GM23248 (cell line): ENCODE measurements at regions of chr6 and their contacts with region 1.

Region 1: DNA sequence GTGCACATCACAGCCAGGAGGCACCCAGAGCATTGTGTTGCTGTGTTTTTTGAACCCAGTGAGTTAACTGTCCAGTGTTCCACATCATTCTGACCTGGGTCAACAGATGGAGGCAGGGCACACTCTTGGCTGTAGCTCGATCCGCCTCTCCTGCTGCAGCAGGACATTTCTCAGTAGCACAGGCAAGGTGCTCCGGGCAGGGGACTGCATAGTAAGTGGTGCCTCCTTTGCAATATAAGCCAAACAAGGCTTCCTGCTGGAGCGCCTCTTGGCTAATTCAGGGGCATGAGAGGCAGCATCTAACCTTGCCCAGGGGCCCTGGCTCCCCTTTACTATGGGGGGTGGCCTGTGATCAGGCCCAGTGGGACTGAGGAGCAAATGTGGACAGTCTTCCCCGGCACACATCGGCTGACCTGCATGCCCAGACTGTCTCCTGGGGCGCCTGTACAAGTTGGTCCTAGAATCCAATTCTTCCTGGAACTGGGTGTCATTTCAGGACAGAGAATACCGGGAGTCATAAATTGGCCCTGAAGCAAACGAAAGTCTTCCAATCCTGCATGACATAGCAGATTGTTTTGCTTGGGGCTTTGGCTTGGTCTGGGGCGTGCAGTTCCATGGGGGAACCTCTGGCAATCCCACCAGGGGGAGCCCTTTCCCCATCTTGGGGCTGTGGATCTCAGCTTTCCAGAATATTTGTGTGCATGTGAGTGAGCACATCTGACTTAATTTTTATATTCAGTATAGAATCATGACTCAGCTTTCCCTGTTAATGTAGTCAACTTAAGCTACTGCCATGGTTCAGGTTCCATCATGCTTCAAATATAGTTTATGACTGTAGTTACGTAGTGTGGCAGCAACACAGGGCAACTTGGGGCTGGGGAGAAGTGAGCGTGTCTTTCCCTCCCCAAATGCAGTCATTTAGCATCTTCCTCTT is 56.0 kb upstream of the DDR1 start:
- DNase-seq: peak; percentile 93
- H3K4me3 ChIP-seq: no peak overlapping the region
- H3K27ac ChIP-seq: peak overlapping the region; percentile 72
- H3K4me1 ChIP-seq: peaks cover 15% of the 10 kb centered on the region
- H3K27me3 ChIP-seq: no peaks in the 10 kb centered on the region

Region 2: GRCh38 chr6:29589423-29590048 is 1238.8 kb before region 1 on chr6:
- in situ Hi-C with region 1: no loop called
- DNase-seq: peak; percentile 58
- H3K4me3 ChIP-seq: no peak overlapping the region
- H3K27ac ChIP-seq: no peak overlapping the region
- H3K4me1 ChIP-seq: no peaks in the 10 kb centered on the region
- H3K27me3 ChIP-seq: peaks cover 5% of the 10 kb centered on the region; the same call in 1 of the 2 replicates

Region 3: DNA sequence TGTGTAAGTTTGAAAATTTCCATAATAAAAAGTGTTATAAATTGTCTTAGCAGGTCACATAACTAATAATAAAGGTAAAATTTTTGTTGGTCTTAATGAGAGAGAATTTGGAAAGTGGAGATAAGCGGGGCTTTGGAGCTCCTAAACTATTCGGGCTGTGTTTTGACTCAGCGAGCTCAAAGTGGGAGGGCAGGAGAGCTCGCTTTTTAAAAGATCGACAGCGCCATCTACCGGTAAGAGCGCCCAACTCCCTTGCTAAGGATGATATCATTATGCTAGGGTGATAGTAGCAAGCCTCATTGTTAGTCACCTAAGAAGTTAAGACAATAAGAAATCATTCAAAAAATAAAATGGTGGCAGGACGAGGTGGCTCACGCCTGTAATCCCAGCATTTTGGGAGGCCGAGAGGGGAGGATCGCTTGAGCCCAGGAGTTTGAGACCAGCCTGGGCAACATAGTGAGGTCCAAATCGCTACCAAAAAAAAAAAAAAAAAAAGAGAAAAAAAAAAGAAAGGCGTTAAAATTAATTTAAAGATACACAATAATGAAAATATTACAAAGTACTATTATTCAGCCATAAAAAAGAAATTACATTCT is 259.3 kb after region 1 on chr6:
- in situ Hi-C with region 1: loop called (anchors 10 kb)
- DNase-seq: peak; percentile 93
- H3K4me3 ChIP-seq: peak overlapping the region; percentile 43
- H3K27ac ChIP-seq: peak overlapping the region; percentile 64
- H3K4me1 ChIP-seq: peaks cover 14% of the 10 kb centered on the region
- H3K27me3 ChIP-seq: no peaks in the 10 kb centered on the region

Region 4: GRCh38 chr6:31351401-31352309 is 523.4 kb after region 1 on chr6:
- in situ Hi-C with region 1: no loop called
- DNase-seq: no peak
- H3K4me3 ChIP-seq: no peak overlapping the region
- H3K27ac ChIP-seq: no peak overlapping the region
- H3K4me1 ChIP-seq: no peaks in the 10 kb centered on the region
- H3K27me3 ChIP-seq: peaks cover 3% of the 10 kb centered on the region; the same call in 1 of the 2 replicates